Common myeloid progenitor, CD34-positive (primary cell): ENCODE measurements at regions of chr14 and their contacts with region 1.

Region 1: GRCh38 chr14:106564058-106564656 is 1037.8 kb downstream of the TMEM121 start:
- DNase-seq: peak; percentile 80 to 91 (median 91)
- H3K4me3 ChIP-seq: no peak overlapping the region
- H3K27ac ChIP-seq: no peak overlapping the region
- H3K4me1 ChIP-seq: peaks cover 0 to 5% (median 1%) of the 10 kb centered on the region in 4 experiments
- H3K27me3 ChIP-seq: peaks cover 0 to 28% (median 0%) of the 10 kb centered on the region in 5 experiments

Region 2: DNA sequence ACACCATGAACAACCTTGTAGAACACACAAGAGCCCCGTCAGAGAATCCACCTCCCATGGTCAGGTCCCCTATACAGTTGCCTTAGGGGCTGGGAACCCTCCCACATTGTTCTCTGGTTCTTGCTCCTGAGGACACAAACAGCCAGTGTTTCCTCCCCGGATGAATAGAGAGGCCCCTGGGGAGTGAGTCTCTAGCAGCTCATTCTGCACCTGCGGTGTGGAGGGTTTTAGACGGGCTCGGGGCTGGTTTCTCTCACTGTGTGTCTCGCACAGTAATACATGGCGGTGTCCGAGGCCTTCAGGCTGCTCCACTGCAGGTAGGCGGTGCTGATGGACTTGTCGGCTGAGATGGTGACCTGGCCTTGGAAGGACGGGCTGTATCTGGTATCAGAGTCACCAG is 14.3 kb after region 1 on chr14:
- CTCF ChIA-PET with region 1: interaction called, 16 read pairs
- POLR2A ChIA-PET with region 1: no interaction called
- DNase-seq: no peak
- H3K4me3 ChIP-seq: no peak overlapping the region
- H3K27ac ChIP-seq: no peak overlapping the region
- H3K4me1 ChIP-seq: no peaks in the 10 kb centered on the region
- H3K27me3 ChIP-seq: peaks cover 0 to 23% (median 11%) of the 10 kb centered on the region in 5 experiments

Region 3: DNA sequence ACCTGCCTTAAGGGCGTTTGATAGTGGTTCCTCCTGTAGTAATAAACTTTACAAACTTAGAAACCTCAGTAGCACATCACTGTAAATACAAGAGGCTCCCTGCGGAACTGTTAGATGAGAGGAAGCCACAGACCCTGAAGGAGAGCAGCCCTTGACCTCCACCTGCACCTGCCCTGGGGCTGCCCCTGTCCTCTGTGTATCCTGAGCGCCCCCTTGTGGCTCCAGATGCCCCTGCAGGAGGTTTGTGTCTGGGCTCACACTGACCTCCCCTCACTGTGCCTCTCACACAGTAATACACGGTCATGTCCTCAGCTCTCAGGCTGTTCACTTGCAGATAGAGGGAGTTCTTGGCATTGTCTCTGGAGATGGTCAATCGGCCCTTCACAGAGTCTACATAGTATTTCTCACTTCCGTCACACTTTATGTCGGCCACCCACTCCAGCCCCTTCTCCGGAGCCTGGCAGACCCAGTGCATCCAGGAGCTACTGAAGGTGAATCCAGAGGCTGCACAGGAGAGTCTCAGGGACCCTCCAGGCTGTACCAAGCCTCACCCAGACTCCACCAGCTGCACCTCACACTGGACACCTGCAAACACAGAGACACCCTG is 22.0 kb after region 1 on chr14:
- CTCF ChIA-PET with region 1: interaction called, 14 read pairs
- POLR2A ChIA-PET with region 1: no interaction called
- DNase-seq: peak; percentile 35 to 63 (median 53)
- H3K4me3 ChIP-seq: no peak overlapping the region
- H3K27ac ChIP-seq: no peak overlapping the region
- H3K4me1 ChIP-seq: peaks cover 0 to 19% (median 10%) of the 10 kb centered on the region in 4 experiments
- H3K27me3 ChIP-seq: peaks cover 0 to 2% (median 0%) of the 10 kb centered on the region in 5 experiments

Region 4: GRCh38 chr14:106599209-106599608 is 35.1 kb after region 1 on chr14:
- CTCF ChIA-PET with region 1: interaction called, 22 read pairs
- POLR2A ChIA-PET with region 1: no interaction called
- DNase-seq: no peak
- H3K4me3 ChIP-seq: no peak overlapping the region
- H3K27ac ChIP-seq: no peak overlapping the region
- H3K4me1 ChIP-seq: no peaks in the 10 kb centered on the region
- H3K27me3 ChIP-seq: peaks cover 0 to 51% (median 15%) of the 10 kb centered on the region in 5 experiments

Region 5: DNA sequence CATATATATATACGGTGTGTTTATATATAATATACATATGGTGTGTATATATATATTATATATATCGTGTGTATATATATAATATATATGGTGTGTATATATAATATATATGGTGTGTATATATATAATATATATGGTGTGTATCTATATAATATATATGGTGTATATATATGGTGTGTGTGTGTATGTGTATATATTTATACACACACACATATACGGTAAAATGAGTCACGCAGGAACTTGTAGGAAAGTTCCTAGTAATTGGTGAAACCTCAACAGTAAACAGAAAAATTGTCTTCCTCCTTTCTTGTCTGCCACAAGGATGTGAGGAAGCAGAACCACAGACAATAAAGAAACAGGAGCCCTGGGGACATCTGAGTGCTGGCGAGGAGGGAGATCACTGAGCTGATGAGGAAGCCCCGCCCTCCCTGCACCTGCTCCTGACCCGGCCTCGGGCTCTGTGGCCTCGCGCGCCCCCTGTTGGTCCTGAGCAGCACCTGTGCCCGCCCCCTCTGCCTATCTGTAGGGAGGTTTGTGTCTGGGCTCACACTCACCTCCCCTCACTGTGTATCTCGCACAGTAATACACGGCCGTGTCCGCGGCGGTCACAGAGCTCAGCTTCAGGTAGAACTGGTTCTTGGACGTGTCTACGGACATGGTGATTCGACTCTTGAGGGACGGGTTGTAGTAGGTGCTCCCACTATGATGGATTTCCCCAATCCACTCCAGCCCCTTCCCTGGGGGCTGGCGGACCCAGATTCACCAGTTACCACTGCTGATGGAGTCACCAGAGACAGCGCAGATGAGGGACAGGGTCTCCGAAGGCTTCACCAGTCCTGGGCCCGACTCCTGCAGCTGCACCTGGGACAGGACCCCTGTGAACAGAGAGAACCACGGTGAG is 41.6 kb after region 1 on chr14:
- CTCF ChIA-PET with region 1: interaction called, 22 read pairs
- POLR2A ChIA-PET with region 1: no interaction called
- DNase-seq: peak; percentile 71 to 87 (median 84)
- H3K4me3 ChIP-seq: no peak overlapping the region
- H3K27ac ChIP-seq: no peak overlapping the region
- H3K4me1 ChIP-seq: peaks cover 0 to 10% (median 4%) of the 10 kb centered on the region in 4 experiments
- H3K27me3 ChIP-seq: peaks cover 0 to 38% (median 9%) of the 10 kb centered on the region in 5 experiments